ENCODE measurements at regions of chr19 and their contacts with region 1.

Region 1: GRCh38 chr19:55426042-55426441 is 17.1 kb downstream of the SHISA7 start:
- DNase-seq: peak in 2 of 10 donors; percentile 63 to 64
- H3K4me3 ChIP-seq: peak overlapping the region in 55 of 59 donors; percentile 6 to 70 (median 42)
- H3K27ac ChIP-seq: peak overlapping the region; percentile 67 to 100 (median 96)
- H3K27me3 ChIP-seq: peaks cover 0 to 2% (median 0%) of the 10 kb centered on the region in 45 donors
- CTCF ChIP-seq: peak in 9 of 56 donors; percentile 11 to 32 (median 21)

Region 2: DNA sequence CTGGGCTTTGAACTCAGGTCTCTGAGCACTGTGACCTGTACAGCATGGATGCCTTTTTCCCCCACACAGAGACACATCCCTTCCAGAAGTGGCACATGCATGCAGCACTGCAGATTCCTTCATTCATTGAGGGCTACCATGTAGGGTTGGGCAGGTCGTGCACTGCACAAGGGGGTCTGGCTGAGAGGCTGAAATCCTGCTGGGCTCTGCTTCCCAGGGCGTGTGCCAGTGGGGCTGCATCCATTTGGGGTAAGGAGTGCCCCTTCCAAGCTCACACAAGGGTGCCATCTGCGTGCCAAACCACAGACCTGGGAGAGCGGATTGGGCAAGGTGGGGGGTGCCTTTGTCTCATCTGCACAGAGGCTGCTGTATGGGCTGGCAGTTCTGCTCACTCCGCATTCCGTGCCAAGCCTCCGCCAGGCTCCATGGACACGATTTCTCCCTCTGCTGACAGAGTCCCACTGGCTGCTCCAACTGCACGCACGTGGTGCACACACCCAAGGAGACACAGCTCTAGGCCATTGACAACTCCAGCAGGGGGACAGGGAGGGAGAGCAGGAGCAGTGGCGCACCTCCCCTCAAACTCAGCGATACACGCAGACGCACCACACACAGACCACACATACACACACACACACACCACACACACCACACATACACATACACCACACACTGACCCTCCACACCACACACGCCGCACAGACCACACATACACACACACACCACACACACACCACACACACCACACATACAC is 21.6 kb after region 1 on chr19:
- intact Hi-C with region 1: loop called in 1 of 2 experiments (anchors 2 kb)
- DNase-seq: peak; percentile 68 to 94 (median 90)
- H3K4me3 ChIP-seq: no peak overlapping the region
- H3K27ac ChIP-seq: peak overlapping the region in 56 of 59 donors; percentile 3 to 90 (median 76)
- H3K27me3 ChIP-seq: peaks cover 0 to 15% (median 0%) of the 10 kb centered on the region in 45 donors
- CTCF ChIP-seq: peak in 16 of 56 donors; percentile 9 to 50 (median 21)

Region 3: GRCh38 chr19:55688422-55689246 is 262.6 kb after region 1 on chr19:
- intact Hi-C with region 1: no loop called
- DNase-seq: peak in 7 of 10 donors; percentile 42 to 81 (median 67)
- H3K4me3 ChIP-seq: no peak overlapping the region
- H3K27ac ChIP-seq: peak overlapping the region in 4 of 59 donors; percentile 0 to 48 (median 20)
- H3K27me3 ChIP-seq: no peaks in the 10 kb centered on the region
- CTCF ChIP-seq: no peak